ENCODE measurements at regions of chr3 and their contacts with region 1.

Region 1: DNA sequence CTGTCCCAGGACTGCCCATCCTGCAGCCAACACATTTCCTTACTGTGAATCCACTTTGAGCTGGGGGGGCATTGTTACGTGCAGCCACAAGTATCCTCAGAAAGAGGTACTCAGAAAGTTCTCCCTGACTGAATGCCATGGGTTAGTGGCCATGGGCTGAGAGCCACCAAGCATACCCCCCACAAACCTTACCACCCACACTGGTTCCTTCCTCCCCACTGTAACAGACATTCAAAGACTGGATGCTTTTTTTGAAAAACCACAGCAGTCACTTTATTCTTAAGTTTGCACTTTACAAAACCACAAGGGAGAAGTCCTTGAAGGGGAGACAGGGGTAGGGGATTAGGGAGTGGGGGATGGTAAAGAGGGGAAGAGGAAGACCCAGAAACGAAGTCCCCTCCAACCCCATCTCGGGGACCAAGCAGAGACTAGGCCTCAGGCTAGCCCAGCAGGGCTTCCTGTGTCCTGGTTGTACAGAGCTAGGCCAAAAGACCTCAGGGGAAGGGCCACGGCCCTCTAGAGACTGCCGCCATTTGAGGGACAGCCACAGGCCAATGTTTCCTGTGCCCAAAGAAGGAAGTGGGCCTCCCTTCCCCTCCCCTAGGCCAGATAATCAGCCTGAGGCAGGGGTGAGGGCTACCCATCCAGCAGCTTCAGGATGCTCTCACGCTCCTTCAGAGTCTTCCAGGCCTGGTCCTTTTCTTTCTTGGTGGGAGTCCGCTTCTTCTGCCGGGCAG is 10.1 kb upstream of the CAMK1 start:
- DNase-seq: peak; percentile 30
- ATAC-seq: peak; percentile 76
- H3K4me3 Mint-ChIP-seq: peak overlapping the region; percentile 32
- H3K27ac Mint-ChIP-seq: peak overlapping the region; percentile 88
- H3K4me1 Mint-ChIP-seq: peaks cover 58% of the 10 kb centered on the region
- H3K27me3 Mint-ChIP-seq: no peaks in the 10 kb centered on the region
- CTCF ChIP-seq: no peak

Region 2: GRCh38 chr3:9749645-9750555 is 30.0 kb before region 1 on chr3 and contains the start of gene OGG1:
- CTCF ChIA-PET with region 1: interaction called, 3 read pairs
- POLR2A ChIA-PET with region 1: interaction called, 57 read pairs
- intact Hi-C with region 1: loop called (anchors 1 kb)
- DNase-seq: peak; percentile 89
- ATAC-seq: peak; percentile 90
- H3K4me3 Mint-ChIP-seq: peak within 1 kb of the TSS; percentile 94
- H3K27ac Mint-ChIP-seq: peak within 1 kb of the TSS; percentile 95
- H3K4me1 Mint-ChIP-seq: peaks cover 48% of the 10 kb centered on the region
- H3K27me3 Mint-ChIP-seq: no peaks in the 10 kb centered on the region
- CTCF ChIP-seq: no peak
- total RNA-seq, gene OGG1: 43.5 and 60.7 TPM in 2 replicates

Region 3: DNA sequence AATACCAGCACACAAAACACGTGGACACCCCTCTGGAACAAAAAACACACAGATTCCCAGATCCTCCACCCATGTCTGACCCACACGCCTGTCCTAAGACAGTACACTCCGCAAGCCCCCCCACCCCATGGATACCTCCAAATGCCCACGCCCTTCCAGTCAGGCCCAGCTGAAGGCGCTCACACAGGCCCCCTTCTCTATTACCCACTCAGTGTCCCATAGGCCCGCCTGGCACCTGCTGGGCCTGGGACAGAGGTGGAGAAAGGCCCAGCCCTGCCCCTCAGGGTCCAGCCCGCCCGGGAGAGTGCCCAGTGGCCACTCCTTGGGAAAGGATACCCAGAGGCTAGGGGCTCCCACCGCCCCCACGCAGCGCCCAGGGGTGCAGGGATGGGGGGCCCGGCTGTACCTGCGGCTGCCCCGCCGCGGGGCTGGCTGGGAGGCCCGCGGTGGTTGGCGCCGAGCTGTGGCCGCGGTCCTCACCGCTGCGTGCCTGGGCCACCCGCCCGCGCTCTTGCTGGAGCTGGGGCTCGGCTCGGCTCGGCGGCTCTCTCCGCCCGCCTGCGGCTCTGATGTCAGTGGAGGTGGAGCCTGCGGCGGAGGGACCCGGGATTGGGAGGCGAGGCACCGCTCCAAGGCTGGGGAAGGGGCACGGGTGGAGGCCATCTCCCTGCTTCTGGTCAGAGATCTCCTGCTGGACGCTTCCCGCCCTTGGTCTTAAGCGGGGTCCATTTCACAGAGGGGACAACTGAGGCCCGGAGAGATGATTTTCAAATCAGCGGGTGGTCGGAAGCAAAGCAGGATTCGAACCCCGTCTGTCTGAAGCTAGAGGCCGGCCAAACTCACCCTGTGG is 10.2 kb before region 1 on chr3 and contains the start of gene CAMK1:
- CTCF ChIA-PET with region 1: interaction called, 4 read pairs
- POLR2A ChIA-PET with region 1: interaction called, 16 read pairs
- intact Hi-C with region 1: loop called (anchors 2 kb)
- DNase-seq: peak; percentile 43
- ATAC-seq: peak; percentile 92
- H3K4me3 Mint-ChIP-seq: peak within 1 kb of the TSS; percentile 58
- H3K27ac Mint-ChIP-seq: no peak within 1 kb of the TSS
- H3K4me1 Mint-ChIP-seq: peaks cover 20% of the 10 kb centered on the region
- H3K27me3 Mint-ChIP-seq: peaks cover 6% of the 10 kb centered on the region
- CTCF ChIP-seq: no peak
- total RNA-seq, gene CAMK1: 0.69 and 1.7 TPM in 2 replicates

Region 4: GRCh38 chr3:9809615-9810432 is 29.9 kb after region 1 on chr3 and contains the start of gene TTLL3:
- CTCF ChIA-PET with region 1: interaction called, 5 read pairs
- POLR2A ChIA-PET with region 1: interaction called, 10 read pairs
- intact Hi-C with region 1: no loop called
- DNase-seq: peak; percentile 55
- ATAC-seq: peak; percentile 69
- H3K4me3 Mint-ChIP-seq: peak within 1 kb of the TSS; percentile 91
- H3K27ac Mint-ChIP-seq: peak within 1 kb of the TSS; percentile 98
- H3K4me1 Mint-ChIP-seq: peaks cover 33% of the 10 kb centered on the region
- H3K27me3 Mint-ChIP-seq: no peaks in the 10 kb centered on the region
- CTCF ChIP-seq: no peak
- total RNA-seq, gene TTLL3: 51.4 and 61.9 TPM in 2 replicates